Activated CD4-positive, alpha-beta memory T cell treated with anti-CD3 and anti-CD28 coated beads for 36 hours (primary cell): ENCODE measurements at regions of chr18 and their contacts with region 1.

Region 1: DNA sequence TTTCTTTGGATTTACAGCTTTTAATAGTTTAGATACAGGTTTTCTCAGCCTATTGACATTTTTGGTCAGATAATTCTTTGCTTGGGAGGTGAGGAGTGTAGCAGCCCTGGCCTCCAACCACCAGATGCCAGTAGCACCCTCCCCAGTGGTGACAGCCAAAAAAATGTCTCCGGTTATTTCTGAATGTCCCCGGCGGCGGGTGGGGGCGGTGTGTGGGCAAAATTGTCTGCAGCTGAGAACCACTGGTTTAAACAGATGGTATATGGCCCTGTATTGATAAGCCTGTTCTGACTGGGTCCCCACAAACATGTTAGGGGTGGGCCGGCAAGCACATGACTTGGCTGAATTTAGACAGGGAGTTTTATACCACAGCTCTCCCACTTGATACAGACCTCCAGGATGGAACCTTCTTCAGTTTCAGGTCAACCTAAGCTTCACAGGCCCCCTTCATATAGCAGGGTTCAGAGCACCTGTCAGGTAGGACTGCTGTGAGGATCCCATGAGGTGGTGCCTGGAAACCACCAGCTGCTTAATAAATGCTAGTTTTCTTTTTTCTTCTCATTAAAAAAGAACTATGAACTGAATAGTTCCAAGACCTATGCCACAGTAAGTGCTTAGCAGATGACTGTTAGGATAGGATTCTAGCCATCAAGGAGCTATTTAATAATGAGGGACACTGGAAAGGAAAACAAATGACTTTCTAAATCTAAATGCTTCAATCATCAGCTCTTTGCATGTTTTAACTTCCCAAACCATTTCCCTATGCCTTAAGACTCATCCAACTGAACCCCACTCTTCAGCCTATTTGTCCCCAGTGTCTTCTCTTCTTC is 18.1 kb downstream of the LPIN2 start:
- DNase-seq: peak; percentile 86
- H3K4me3 Mint-ChIP-seq: peak overlapping the region; percentile 26
- H3K27ac Mint-ChIP-seq: peak overlapping the region; percentile 91
- H3K4me1 Mint-ChIP-seq: peaks cover 83% of the 10 kb centered on the region
- H3K27me3 Mint-ChIP-seq: no peaks in the 10 kb centered on the region

Region 2: DNA sequence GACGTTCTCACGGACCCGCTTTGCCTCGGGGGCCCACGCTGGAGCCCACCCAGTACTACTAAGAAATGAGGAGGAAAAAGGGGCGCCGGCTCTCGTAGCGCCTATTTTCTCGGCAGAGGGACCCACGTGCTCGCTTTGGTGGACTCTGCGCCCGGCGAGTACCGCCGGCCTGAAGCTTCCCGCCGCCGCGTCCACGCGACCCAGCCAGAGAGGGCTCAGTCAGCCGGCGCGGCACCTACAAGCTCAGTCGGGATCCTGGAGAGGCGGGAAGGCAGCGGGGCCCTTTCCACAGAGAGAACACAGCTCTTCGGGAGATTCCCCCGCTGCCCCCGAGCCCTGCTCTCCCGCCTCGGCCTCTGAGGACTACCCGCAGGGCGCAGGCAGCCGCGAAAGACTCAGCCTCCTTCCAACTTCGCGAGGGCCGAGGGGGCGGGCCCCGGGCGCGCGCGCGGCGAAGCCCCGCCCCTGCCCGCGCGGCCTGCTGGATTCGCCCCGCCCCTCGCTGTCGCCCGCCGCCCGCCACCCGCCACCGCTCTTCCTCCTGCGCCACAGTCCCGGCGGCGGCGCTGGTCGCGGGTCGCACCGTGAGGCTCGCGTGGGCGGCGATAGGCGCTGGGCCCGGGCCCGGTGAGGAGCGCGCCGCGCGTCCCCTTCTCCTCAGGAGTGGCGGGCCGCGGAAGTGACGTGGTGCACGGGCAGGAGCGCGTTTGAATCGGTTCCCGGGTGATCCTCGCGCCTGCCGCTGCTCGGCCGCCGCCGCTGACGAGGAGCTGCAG is 339.5 kb before region 1 on chr18 and contains the start of gene SMCHD1:
- CTCF ChIA-PET with region 1: no interaction called
- POLR2A ChIA-PET with region 1: no interaction called
- intact Hi-C with region 1: loop called (anchors 5 kb)
- DNase-seq: peak; percentile 94
- H3K4me3 Mint-ChIP-seq: peak within 1 kb of the TSS; percentile 91
- H3K27ac Mint-ChIP-seq: peak within 1 kb of the TSS; percentile 97
- H3K4me1 Mint-ChIP-seq: peaks cover 29% of the 10 kb centered on the region
- H3K27me3 Mint-ChIP-seq: no peaks in the 10 kb centered on the region
- total RNA-seq, gene SMCHD1: 86.0 to 94.5 TPM

Region 3: GRCh38 chr18:2958819-2959298 is 36.0 kb before region 1 on chr18:
- CTCF ChIA-PET with region 1: interaction called, 8 read pairs
- POLR2A ChIA-PET with region 1: interaction called, 19 read pairs
- intact Hi-C with region 1: loop called (anchors 1 kb)
- DNase-seq: peak; percentile 64
- H3K4me3 Mint-ChIP-seq: peak overlapping the region; percentile 62
- H3K27ac Mint-ChIP-seq: peak overlapping the region; percentile 100
- H3K4me1 Mint-ChIP-seq: peaks cover 92% of the 10 kb centered on the region
- H3K27me3 Mint-ChIP-seq: no peaks in the 10 kb centered on the region

Region 4: GRCh38 chr18:3012964-3013804 is 18.4 kb after region 1 on chr18 and contains the start of gene LPIN2:
- CTCF ChIA-PET with region 1: interaction called, 4 read pairs
- POLR2A ChIA-PET with region 1: interaction called, 18 read pairs
- intact Hi-C with region 1: loop called (anchors 1 kb)
- DNase-seq: peak; percentile 98
- H3K4me3 Mint-ChIP-seq: peak within 1 kb of the TSS; percentile 98
- H3K27ac Mint-ChIP-seq: peak within 1 kb of the TSS; percentile 96
- H3K4me1 Mint-ChIP-seq: peaks cover 63% of the 10 kb centered on the region
- H3K27me3 Mint-ChIP-seq: no peaks in the 10 kb centered on the region
- total RNA-seq, gene LPIN2: 102 to 107 TPM

Region 5: DNA sequence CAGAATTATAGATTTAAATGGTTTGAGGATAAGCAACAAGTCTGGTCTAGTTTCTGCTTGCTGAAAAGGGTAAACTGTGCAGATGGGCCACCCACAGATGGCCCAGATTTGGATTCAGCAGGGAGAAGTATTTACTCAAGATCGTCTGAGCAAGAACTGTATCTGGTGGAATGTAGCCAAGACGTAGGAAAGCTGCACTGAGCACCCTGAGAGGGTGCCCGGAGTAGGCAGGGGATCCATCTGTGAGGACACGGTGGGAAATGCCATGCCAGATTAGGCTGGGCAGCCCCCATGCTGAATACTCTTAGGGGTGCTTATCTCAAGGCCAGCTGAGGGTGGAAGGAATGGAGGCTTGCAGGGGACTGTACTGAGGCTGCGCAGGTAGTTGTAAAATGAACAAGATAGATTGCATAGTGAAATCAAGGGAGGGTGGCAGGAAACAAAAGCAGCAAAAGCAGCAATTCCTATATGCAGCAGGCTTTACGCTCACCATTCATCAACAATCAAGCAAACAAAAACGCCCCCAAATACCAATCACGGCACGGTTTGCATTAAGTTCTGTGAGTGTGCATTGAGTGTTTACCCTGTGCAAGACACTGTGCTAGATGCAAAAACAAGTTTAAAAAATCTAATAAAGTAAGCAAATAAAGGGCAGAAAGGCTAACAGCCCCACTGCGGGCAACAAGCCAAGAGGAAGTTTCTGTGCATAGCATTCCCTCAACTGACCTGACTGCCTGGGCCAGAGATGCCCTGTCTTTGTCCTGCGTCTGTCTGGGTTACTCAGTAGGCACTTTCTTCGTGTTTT is 50.3 kb after region 1 on chr18:
- CTCF ChIA-PET with region 1: no interaction called
- POLR2A ChIA-PET with region 1: no interaction called
- intact Hi-C with region 1: loop called (anchors 1 kb)
- DNase-seq: no peak
- H3K4me3 Mint-ChIP-seq: no peak overlapping the region
- H3K27ac Mint-ChIP-seq: no peak overlapping the region
- H3K4me1 Mint-ChIP-seq: peaks cover 22% of the 10 kb centered on the region
- H3K27me3 Mint-ChIP-seq: no peaks in the 10 kb centered on the region

Region 6: GRCh38 chr18:3151399-3152264 is 156.8 kb after region 1 on chr18:
- CTCF ChIA-PET with region 1: interaction called, 33 read pairs
- POLR2A ChIA-PET with region 1: no interaction called
- intact Hi-C with region 1: loop called (anchors 2 kb)
- DNase-seq: no peak
- H3K4me3 Mint-ChIP-seq: no peak overlapping the region
- H3K27ac Mint-ChIP-seq: no peak overlapping the region
- H3K4me1 Mint-ChIP-seq: peaks cover 6% of the 10 kb centered on the region
- H3K27me3 Mint-ChIP-seq: no peaks in the 10 kb centered on the region